HEK293T (cell line): ENCODE measurements at regions of chr5 and their contacts with region 1.

Region 1: DNA sequence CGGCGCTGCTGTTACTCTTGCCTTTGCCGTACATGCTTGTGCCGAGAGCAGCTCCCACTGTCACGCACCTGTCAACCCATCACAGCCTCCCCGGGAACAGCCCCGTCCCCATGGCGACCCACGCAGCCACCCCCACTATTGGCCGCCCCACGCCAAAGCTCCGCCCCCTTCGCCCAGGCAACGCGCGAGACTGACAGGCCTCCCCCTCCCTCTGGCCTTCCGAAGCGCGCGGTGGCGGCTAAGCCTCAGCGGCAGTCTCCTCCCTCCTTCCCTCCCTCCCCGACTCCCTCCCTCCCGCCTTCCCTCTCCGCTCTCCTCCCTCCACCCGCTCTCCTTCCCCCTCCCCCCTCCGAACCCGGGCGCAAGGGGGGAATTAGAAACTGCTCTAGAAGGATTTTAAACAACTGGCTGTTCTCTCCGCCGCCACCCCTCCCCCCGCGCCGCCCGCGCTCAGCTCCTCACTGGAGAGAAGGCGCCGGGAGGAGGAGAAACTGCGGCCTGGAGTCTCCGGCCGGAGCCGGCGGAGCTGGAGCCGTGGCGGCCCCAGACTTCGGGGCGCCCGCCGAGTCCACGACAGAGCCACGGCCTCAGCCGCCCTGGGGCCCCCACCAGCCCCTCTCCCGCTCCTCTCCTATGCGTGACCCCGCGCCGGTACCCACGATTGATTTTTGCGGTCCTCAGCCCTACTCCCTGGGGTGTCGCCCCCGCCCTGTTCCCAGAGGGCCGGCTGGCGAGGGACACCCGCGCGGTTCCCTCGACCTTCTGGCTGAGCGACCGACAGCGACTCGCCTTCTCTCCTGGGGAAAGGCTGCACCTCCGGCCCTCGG is at the start of gene SSBP2:
- DNase-seq: peak; percentile 91

Region 2: GRCh38 chr5:81665795-81666194 is 85.4 kb before region 1 on chr5:
- CTCF ChIA-PET with region 1: no interaction called
- POLR2A ChIA-PET with region 1: no interaction called
- DNase-seq: no peak

Region 3: DNA sequence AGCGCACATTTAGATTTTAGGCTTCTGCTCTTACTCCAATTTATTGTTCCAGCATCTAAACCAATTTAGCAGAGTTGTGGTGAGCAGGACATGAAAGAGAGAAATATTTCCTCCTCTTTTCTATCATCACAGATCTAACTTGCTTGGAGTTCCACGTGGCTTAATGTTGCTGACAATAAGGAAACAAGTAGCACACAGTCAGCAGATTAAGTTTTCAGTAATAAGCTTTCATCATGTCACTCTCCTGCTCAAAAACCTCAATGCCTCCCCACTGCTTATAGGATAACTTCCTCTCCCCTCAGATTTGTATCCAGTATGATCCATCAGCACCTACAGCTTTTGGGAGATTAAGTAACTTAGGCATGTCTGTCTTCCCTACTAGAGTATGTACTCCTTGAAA is 10.0 kb after region 1 on chr5:
- CTCF ChIA-PET with region 1: interaction called, 3 read pairs
- POLR2A ChIA-PET with region 1: interaction called, 11 read pairs
- DNase-seq: no peak

Region 4: GRCh38 chr5:81787474-81788242 is 36.4 kb after region 1 on chr5:
- CTCF ChIA-PET with region 1: no interaction called
- POLR2A ChIA-PET with region 1: interaction called, 13 read pairs
- DNase-seq: no peak

Region 5: DNA sequence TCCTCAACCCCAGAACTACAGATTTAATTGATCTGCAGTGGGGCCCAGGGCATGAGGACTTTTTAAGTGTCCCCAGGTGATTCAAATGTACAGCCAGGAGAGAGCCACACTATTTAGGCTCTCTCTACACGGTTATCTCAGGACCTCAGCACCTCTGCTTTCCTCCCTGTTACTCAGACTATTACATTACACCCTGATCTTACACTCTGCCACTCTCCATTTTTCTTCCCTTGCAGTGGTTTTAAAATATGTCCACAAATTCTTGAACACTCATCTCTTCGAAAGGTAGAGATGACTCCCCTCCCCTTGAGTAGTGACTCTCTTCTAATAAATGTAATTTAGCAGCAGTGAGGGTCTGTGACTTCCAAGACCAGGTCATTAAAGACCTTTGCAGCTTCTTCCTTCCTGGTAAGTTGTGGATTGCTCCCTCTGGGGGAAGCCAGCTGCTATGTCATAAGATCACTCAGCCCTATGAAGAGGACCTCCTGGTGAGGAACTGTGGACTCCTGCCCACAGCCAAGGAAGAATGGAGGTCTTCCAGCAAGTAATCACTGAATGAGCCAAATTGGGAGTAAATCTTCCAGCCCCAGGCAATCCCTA is 87.2 kb after region 1 on chr5:
- CTCF ChIA-PET with region 1: interaction called, 14 read pairs
- POLR2A ChIA-PET with region 1: interaction called, 6 read pairs
- DNase-seq: peak; percentile 53

Region 6: DNA sequence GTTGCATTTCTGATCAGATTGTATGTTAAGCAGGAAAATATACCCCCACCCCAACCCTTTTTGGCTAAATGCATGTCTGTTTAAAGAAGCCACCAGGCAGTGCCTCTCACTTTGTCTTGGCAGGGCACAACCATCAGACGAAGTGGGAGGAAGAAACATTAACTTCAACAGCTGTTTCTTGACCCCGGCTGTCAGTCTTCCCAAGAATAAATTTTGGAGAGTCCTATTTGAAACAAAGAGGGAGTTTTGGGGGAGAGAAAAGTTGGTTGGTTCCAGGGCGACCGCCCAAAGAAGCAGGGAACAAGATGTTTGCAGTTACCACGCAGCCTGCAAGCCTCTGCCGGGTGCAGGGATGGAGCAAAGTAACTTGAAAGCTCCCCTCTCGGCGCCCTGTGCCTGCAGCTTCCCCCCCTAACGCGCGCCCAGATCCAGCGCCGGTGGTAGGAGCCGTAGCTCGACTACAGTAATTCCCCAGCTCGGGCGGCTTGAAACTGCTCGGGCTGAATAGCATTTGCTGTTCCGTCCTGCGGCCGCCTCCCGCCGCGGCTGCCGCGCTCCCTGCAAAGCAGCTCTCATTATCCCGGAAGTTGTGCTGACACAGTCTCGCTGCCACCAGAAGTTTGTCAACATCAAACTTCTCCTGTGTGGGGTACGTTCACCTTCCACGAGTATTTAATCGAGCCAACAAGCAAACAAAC is 100.4 kb after region 1 on chr5:
- CTCF ChIA-PET with region 1: interaction called, 21 read pairs
- POLR2A ChIA-PET with region 1: interaction called, 123 read pairs
- DNase-seq: peak; percentile 89